IMR-90 (cell line): ENCODE measurements at regions of chr21 and their contacts with region 1.

Region 1: GRCh38 chr21:24225431-24225830 is 1381.8 kb downstream of the MRPL39 start:
- DNase-seq: peak; percentile 87
- ATAC-seq: peak; percentile 79
- H3K4me3 ChIP-seq: no peak overlapping the region
- H3K27ac ChIP-seq: no peak overlapping the region
- H3K4me1 ChIP-seq: no peaks in the 10 kb centered on the region
- H3K27me3 ChIP-seq: no peaks in the 10 kb centered on the region
- CTCF ChIP-seq: no peak
- POLR2A ChIP-seq: no peak
- RAD21 ChIP-seq: no peak

Region 2: DNA sequence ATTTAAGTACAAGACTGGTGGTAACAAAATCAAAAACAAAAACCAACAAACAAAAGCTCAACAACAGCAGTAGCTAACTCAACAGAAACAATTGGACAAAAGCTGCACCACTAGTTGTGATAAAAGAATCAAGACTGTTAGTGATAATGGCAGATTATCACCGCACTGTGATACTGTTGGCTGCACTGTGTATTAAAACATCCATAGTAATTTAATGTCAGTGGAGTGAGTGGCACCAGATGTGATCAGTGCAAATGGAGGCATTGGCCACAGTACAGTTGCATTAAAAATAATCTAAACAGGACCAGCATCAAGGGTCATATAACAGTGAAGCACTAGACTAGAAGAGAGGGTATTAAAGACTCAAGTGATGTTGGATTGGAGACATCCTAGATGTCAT is 40.6 kb after region 1 on chr21:
- CTCF ChIA-PET with region 1: no interaction called
- POLR2A ChIA-PET with region 1: no interaction called
- dilution Hi-C with region 1: no loop called
- in situ Hi-C with region 1: no loop called
- intact Hi-C with region 1: loop called (anchors 5 kb)
- DNase-seq: no peak
- ATAC-seq: no peak
- H3K4me3 ChIP-seq: no peak overlapping the region
- H3K27ac ChIP-seq: no peak overlapping the region
- H3K4me1 ChIP-seq: no peaks in the 10 kb centered on the region
- H3K27me3 ChIP-seq: no peaks in the 10 kb centered on the region
- CTCF ChIP-seq: no peak
- POLR2A ChIP-seq: no peak
- RAD21 ChIP-seq: no peak